CD4-positive, alpha-beta T cell (primary cell): ENCODE measurements at regions of chr6 and their contacts with region 1.

Region 1: DNA sequence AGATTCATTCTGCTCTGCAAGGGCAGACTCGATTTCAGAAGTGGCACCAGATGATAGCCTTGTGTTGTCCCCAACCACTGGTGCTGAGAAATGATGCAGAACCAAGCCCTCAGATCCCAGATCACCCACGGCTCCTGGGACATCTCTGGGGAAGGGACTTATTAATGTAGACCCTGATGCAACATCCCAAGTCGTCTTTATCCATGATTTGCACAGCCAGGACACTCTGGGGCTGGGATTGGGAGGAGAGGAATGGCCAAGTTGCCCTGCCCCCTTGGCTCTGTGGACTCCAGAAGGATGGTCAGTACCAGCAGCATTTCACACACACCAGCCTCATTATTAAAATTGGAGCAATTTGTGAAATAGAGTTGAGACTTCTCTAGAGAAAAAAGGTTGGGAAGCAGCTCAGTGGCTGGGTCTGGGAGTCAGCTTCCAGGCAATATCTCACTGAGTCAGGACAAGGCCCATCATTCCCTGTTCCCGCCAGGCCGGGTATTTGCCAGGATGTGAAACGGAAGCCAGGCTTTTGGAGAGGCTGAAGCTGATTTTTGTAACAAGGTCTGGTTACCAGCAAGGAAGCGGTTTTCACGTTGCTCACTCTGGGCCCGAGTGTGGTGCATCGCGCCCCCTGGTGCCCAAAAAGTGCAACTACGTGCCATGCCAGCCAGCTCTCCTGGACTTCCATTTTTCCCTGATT is 67.4 kb downstream of the ZBTB2 start:
- DNase-seq: peak; percentile 54 to 83 (median 64)
- ATAC-seq: peak; percentile 87
- H3K4me3 ChIP-seq: no peak overlapping the region
- H3K4me3 Mint-ChIP-seq: peak overlapping the region; percentile 60
- H3K27ac ChIP-seq: no peak overlapping the region
- H3K27ac Mint-ChIP-seq: no peak overlapping the region
- H3K4me1 ChIP-seq: peaks cover 17% of the 10 kb centered on the region
- H3K4me1 Mint-ChIP-seq: peaks cover 22% of the 10 kb centered on the region
- H3K27me3 ChIP-seq: peaks cover 23 to 26% of the 10 kb centered on the region in 2 experiments
- H3K27me3 Mint-ChIP-seq: peaks cover 51% of the 10 kb centered on the region
- CTCF ChIP-seq: peak; percentile 97

Region 2: GRCh38 chr6:150891888-150892485 is 432.0 kb before region 1 on chr6:
- CTCF ChIA-PET with region 1: interaction called, 78 read pairs
- POLR2A ChIA-PET with region 1: interaction called, 20 read pairs
- intact Hi-C with region 1: loop called (anchors 1 kb)
- DNase-seq: peak; percentile 30 to 74 (median 50)
- ATAC-seq: peak; percentile 71
- H3K4me3 ChIP-seq: no peak overlapping the region
- H3K4me3 Mint-ChIP-seq: no peak overlapping the region
- H3K27ac ChIP-seq: no peak overlapping the region
- H3K27ac Mint-ChIP-seq: no peak overlapping the region
- H3K4me1 ChIP-seq: peaks cover 7% of the 10 kb centered on the region
- H3K4me1 Mint-ChIP-seq: peaks cover 19% of the 10 kb centered on the region
- H3K27me3 ChIP-seq: no peaks in the 10 kb centered on the region
- H3K27me3 Mint-ChIP-seq: no peaks in the 10 kb centered on the region
- CTCF ChIP-seq: peak; percentile 91

Region 3: DNA sequence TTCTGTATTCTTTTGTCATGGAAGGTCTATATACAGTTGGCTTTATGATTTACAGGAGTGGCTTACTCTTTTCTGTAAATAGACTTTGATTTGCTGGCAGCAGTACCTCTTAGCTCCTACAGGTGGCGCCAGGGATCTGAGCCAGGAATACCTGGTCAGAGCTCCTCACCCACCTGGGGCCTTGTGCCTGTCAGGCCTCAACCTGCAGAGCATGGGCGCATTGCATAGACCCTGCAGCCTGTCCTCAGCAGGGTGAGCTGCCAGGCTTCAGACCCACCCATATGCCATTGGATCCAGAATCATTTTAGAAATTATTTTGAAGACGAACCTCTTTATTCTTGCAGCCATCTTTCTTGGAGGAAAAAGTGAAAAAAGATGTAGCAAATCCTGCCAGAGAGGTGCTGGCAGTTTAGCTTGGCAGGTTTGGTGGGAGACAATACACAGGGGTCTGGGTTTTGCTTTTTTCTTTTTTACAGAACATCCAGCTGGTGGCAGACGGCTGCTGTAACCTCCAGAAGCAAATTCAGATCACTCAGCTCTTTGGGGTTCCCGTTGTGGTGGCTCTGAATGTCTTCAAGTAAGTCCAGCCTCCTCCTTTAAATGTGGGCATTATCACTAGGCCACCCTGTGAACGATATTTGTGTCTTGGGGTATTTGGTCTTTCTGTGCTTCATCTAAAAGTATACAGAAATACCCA is 309.4 kb before region 1 on chr6:
- CTCF ChIA-PET with region 1: interaction called, 29 read pairs
- POLR2A ChIA-PET with region 1: interaction called, 11 read pairs
- intact Hi-C with region 1: loop called (anchors 1 kb)
- DNase-seq: peak; percentile 32 to 79 (median 42)
- ATAC-seq: peak; percentile 60
- H3K4me3 ChIP-seq: no peak overlapping the region
- H3K4me3 Mint-ChIP-seq: peak overlapping the region; percentile 6
- H3K27ac ChIP-seq: no peak overlapping the region
- H3K27ac Mint-ChIP-seq: no peak overlapping the region
- H3K4me1 ChIP-seq: peaks cover 2% of the 10 kb centered on the region
- H3K4me1 Mint-ChIP-seq: peaks cover 4% of the 10 kb centered on the region
- H3K27me3 ChIP-seq: no peaks in the 10 kb centered on the region
- H3K27me3 Mint-ChIP-seq: no peaks in the 10 kb centered on the region
- CTCF ChIP-seq: peak; percentile 98

Region 4: GRCh38 chr6:151335930-151336329 is 12.0 kb after region 1 on chr6:
- CTCF ChIA-PET with region 1: interaction called, 35 read pairs
- POLR2A ChIA-PET with region 1: interaction called, 5 read pairs
- intact Hi-C with region 1: no loop called
- DNase-seq: no peak
- ATAC-seq: no peak
- H3K4me3 ChIP-seq: no peak overlapping the region
- H3K4me3 Mint-ChIP-seq: no peak overlapping the region
- H3K27ac ChIP-seq: no peak overlapping the region
- H3K27ac Mint-ChIP-seq: no peak overlapping the region
- H3K4me1 ChIP-seq: peaks cover 2% of the 10 kb centered on the region
- H3K4me1 Mint-ChIP-seq: peaks cover 5% of the 10 kb centered on the region
- H3K27me3 ChIP-seq: no peaks in the 10 kb centered on the region
- H3K27me3 Mint-ChIP-seq: no peaks in the 10 kb centered on the region
- CTCF ChIP-seq: no peak